ENCODE measurements at regions of chr15 and their contacts with region 1.

Region 1: GRCh38 chr15:52331490-52332240 is 36.1 kb upstream of the MYO5C start:
- DNase-seq: peak; percentile 76
- H3K4me3 Mint-ChIP-seq: no peak overlapping the region
- H3K27ac Mint-ChIP-seq: peak overlapping the region; percentile 82
- H3K4me1 Mint-ChIP-seq: peaks cover 18% of the 10 kb centered on the region
- H3K27me3 Mint-ChIP-seq: no peaks in the 10 kb centered on the region

Region 2: DNA sequence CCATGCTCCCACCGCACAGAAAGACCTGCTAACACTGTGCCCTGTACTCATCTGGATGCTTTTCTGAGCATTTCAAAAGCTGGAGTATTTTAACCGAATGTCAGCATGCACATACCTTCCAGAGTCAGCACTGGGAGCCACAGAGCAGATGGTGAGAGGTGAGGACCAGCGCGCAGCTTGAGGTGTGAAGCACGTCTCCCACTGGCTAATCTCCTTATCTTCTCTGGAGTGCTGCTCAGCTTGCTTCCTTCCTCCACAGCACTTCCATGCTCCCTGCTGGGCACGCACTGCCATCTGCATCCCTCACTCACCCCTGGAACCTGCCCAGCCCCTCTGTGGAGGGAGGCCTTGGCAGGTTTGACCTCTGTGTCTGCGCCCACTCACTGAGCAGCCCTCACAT is 140.5 kb before region 1 on chr15 and contains the start of gene GNB5:
- CTCF ChIA-PET with region 1: no interaction called
- POLR2A ChIA-PET with region 1: no interaction called
- intact Hi-C with region 1: no loop called
- DNase-seq: no peak
- H3K4me3 Mint-ChIP-seq: no peak within 1 kb of the TSS
- H3K27ac Mint-ChIP-seq: no peak within 1 kb of the TSS
- H3K4me1 Mint-ChIP-seq: no peaks in the 10 kb centered on the region
- H3K27me3 Mint-ChIP-seq: no peaks in the 10 kb centered on the region
- total RNA-seq, gene GNB5: 24.0 to 25.1 TPM

Region 3: DNA sequence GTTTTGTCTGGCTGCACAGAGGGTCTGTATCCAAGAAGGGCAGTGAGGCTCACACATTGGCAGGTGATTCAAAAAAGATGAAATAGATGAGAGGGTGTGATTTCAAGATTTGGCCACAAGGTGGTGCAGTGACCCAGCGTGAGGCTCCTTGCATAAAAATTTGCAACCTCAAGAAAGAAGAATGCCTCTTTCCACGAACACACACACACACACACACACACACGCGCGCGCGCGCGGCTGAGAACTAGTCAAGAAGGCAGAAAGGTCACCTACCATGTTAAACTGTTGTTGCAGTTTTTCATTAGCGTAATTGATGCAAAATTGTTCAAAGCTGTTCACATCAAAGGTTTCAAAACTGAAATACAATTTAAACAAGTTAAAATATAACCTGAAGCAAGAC is 75.3 kb before region 1 on chr15:
- CTCF ChIA-PET with region 1: interaction called, 7 read pairs
- POLR2A ChIA-PET with region 1: no interaction called
- intact Hi-C with region 1: loop called (anchors 1 kb)
- DNase-seq: peak; percentile 84
- H3K4me3 Mint-ChIP-seq: peak overlapping the region; percentile 37
- H3K27ac Mint-ChIP-seq: peak overlapping the region; percentile 56
- H3K4me1 Mint-ChIP-seq: peaks cover 23% of the 10 kb centered on the region
- H3K27me3 Mint-ChIP-seq: no peaks in the 10 kb centered on the region

Region 4: GRCh38 chr15:52379395-52380106 is 47.9 kb after region 1 on chr15:
- CTCF ChIA-PET with region 1: interaction called, 3 read pairs
- POLR2A ChIA-PET with region 1: no interaction called
- intact Hi-C with region 1: loop called (anchors 5 kb)
- DNase-seq: peak; percentile 51
- H3K4me3 Mint-ChIP-seq: peak overlapping the region; percentile 49
- H3K27ac Mint-ChIP-seq: peak overlapping the region; percentile 75
- H3K4me1 Mint-ChIP-seq: peaks cover 43% of the 10 kb centered on the region
- H3K27me3 Mint-ChIP-seq: no peaks in the 10 kb centered on the region

Region 5: DNA sequence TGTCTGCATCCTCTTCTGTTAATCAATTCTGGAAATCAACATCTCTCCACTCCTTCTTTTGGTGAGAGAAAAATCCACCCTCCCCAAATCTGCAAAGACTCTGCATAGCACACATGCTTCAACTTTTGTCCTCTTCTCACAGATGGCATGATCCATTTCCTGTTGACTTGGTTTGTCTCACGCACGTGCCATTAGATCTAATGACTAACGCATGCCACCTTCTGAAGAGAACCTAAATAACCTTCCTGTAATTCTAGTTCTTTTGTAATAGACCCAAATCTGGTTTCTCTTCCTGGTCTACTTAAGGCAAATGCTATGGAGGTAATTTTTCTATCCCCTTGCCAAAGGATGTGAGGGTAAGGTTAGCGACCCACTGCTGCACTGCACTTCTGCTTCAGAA is 398.5 kb after region 1 on chr15:
- CTCF ChIA-PET with region 1: interaction called, 23 read pairs
- POLR2A ChIA-PET with region 1: interaction called, 3 read pairs
- intact Hi-C with region 1: loop called (anchors 1 kb)
- DNase-seq: peak; percentile 53
- H3K4me3 Mint-ChIP-seq: no peak overlapping the region
- H3K27ac Mint-ChIP-seq: peak overlapping the region; percentile 43
- H3K4me1 Mint-ChIP-seq: peaks cover 36% of the 10 kb centered on the region
- H3K27me3 Mint-ChIP-seq: no peaks in the 10 kb centered on the region

Region 6: GRCh38 chr15:52735231-52736089 is 403.8 kb after region 1 on chr15:
- CTCF ChIA-PET with region 1: interaction called, 23 read pairs
- POLR2A ChIA-PET with region 1: interaction called, 3 read pairs
- intact Hi-C with region 1: loop called (anchors 1 kb)
- DNase-seq: peak; percentile 75
- H3K4me3 Mint-ChIP-seq: no peak overlapping the region
- H3K27ac Mint-ChIP-seq: no peak overlapping the region
- H3K4me1 Mint-ChIP-seq: peaks cover 10% of the 10 kb centered on the region
- H3K27me3 Mint-ChIP-seq: peaks cover 1% of the 10 kb centered on the region